ENCODE measurements at regions of chr11 and their contacts with region 1.

Region 1: GRCh38 chr11:75520688-75521087 is 5.1 kb downstream of the GDPD5 start:
- DNase-seq: no peak
- H3K4me3 Mint-ChIP-seq: no peak overlapping the region
- H3K27ac Mint-ChIP-seq: no peak overlapping the region
- H3K4me1 Mint-ChIP-seq: peaks cover 51% of the 10 kb centered on the region
- H3K27me3 Mint-ChIP-seq: no peaks in the 10 kb centered on the region

Region 2: GRCh38 chr11:75425422-75425821 is 95.3 kb before region 1 on chr11:
- CTCF ChIA-PET with region 1: no interaction called
- POLR2A ChIA-PET with region 1: no interaction called
- intact Hi-C with region 1: no loop called
- DNase-seq: no peak
- H3K4me3 Mint-ChIP-seq: no peak overlapping the region
- H3K27ac Mint-ChIP-seq: no peak overlapping the region
- H3K4me1 Mint-ChIP-seq: peaks cover 7% of the 10 kb centered on the region
- H3K27me3 Mint-ChIP-seq: peaks cover 9% of the 10 kb centered on the region

Region 3: GRCh38 chr11:75445315-75445953 is 75.3 kb before region 1 on chr11:
- CTCF ChIA-PET with region 1: interaction called, 26 read pairs
- POLR2A ChIA-PET with region 1: no interaction called
- intact Hi-C with region 1: no loop called
- DNase-seq: peak; percentile 80
- H3K4me3 Mint-ChIP-seq: no peak overlapping the region
- H3K27ac Mint-ChIP-seq: no peak overlapping the region
- H3K4me1 Mint-ChIP-seq: no peaks in the 10 kb centered on the region
- H3K27me3 Mint-ChIP-seq: no peaks in the 10 kb centered on the region

Region 4: GRCh38 chr11:75508044-75508561 is 12.6 kb before region 1 on chr11:
- CTCF ChIA-PET with region 1: no interaction called
- POLR2A ChIA-PET with region 1: interaction called, 3 read pairs
- intact Hi-C with region 1: loop called (anchors 2 kb)
- DNase-seq: peak; percentile 71
- H3K4me3 Mint-ChIP-seq: no peak overlapping the region
- H3K27ac Mint-ChIP-seq: peak overlapping the region; percentile 70
- H3K4me1 Mint-ChIP-seq: peaks cover 54% of the 10 kb centered on the region
- H3K27me3 Mint-ChIP-seq: no peaks in the 10 kb centered on the region

Region 5: DNA sequence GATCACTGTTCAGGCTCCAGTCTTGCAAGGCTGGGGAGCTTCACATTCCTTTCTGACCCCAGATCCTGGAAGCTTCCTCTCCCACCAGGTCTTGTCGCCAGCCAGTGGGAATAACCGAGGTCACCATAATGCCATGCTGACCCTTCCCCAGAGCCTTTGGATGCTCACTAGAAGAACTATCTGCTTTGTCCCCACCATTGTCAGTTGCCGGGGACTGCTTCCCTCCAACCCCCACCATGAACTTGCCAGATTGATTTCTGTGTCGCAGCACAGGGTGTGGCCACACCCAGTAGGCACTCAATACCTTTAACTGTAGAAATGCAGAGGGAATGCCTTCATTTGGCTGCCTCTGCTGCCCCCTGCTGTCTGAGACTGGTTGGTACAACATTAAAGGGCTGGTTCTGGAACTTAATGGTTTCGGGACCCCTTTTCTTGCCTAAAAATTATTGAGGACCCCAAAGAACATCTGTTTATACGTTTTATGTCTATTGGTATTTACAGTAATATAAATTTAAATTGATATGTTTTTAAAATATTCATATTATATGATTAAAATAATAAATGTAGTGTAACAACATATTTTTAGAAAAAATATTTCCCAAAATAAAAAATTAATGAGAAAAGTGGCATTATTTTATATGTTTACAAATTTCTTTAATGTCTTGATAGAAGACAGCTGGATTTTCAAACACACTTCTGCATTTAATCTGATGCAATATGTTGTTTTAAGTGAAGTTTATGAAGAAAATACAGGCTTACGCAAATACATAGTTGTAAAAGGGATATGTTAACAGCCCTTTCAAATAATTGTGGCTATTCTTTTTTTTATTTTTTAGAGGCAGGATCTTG is 11.7 kb after region 1 on chr11:
- CTCF ChIA-PET with region 1: interaction called, 17 read pairs
- POLR2A ChIA-PET with region 1: interaction called, 3 read pairs
- intact Hi-C with region 1: no loop called
- DNase-seq: peak; percentile 89
- H3K4me3 Mint-ChIP-seq: no peak overlapping the region
- H3K27ac Mint-ChIP-seq: peak overlapping the region; percentile 39
- H3K4me1 Mint-ChIP-seq: peaks cover 37% of the 10 kb centered on the region
- H3K27me3 Mint-ChIP-seq: no peaks in the 10 kb centered on the region